ENCODE measurements at regions of chr4 and their contacts with region 1.

Region 1: GRCh38 chr4:168585168-168586091 is 88.6 kb downstream of the PALLD start:
- DNase-seq: peak; percentile 91
- H3K4me3 ChIP-seq: no peak overlapping the region
- H3K27ac ChIP-seq: no peak overlapping the region
- H3K4me1 ChIP-seq: peaks cover 26% of the 10 kb centered on the region
- H3K27me3 ChIP-seq: no peaks in the 10 kb centered on the region
- CTCF ChIP-seq: peak; percentile 91

Region 2: GRCh38 chr4:168631241-168632162 is 46.1 kb after region 1 on chr4:
- CTCF ChIA-PET with region 1: interaction called, 3 read pairs
- POLR2A ChIA-PET with region 1: no interaction called
- intact Hi-C with region 1: loop called (anchors 2 kb)
- DNase-seq: peak; percentile 87
- H3K4me3 ChIP-seq: peak overlapping the region; percentile 68
- H3K27ac ChIP-seq: peak overlapping the region; percentile 58
- H3K4me1 ChIP-seq: peaks cover 51% of the 10 kb centered on the region
- H3K27me3 ChIP-seq: no peaks in the 10 kb centered on the region
- CTCF ChIP-seq: peak; percentile 56

Region 3: DNA sequence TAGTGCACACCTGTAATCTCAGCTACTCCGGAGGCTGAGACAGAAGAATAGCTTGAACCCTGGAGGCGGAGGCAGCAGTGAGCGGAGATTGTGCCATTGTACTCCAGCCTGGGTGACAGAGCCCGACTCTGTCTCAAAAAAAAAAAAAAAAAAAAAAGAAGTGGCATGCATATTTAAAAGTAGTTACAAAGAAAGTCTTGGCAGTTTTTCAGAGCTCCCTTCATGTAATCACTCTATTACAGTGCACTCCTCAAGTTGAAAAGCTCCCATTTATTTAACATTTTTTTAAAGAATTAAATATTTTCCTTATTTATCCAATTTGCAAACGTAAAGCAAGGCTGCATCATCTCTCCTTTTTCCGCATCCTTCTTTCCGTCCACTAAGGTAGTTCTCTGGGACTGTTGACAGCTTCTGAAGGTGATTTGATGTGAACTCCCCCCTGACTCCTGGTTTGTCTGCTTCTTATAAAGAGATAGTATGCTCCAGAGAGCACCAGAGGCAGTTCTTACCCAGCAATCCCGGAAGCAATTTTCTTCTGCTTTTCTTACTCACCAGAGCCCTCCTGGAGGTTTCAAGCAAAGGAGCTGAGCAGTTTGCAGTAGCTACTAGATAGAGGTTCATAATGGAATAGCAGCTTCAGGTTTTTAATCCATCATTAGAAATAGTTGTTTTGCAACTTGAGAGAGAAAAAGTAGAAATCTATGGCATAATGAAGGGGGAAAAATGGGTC is 62.4 kb after region 1 on chr4:
- CTCF ChIA-PET with region 1: interaction called, 10 read pairs
- POLR2A ChIA-PET with region 1: no interaction called
- intact Hi-C with region 1: no loop called
- DNase-seq: peak; percentile 92
- H3K4me3 ChIP-seq: peak overlapping the region; percentile 16
- H3K27ac ChIP-seq: peak overlapping the region; percentile 48
- H3K4me1 ChIP-seq: peaks cover 82% of the 10 kb centered on the region
- H3K27me3 ChIP-seq: no peaks in the 10 kb centered on the region
- CTCF ChIP-seq: no peak

Region 4: GRCh38 chr4:168831919-168832762 is 246.7 kb after region 1 on chr4:
- CTCF ChIA-PET with region 1: no interaction called
- POLR2A ChIA-PET with region 1: interaction called, 6 read pairs
- intact Hi-C with region 1: loop called (anchors 10 kb)
- DNase-seq: peak; percentile 80
- H3K4me3 ChIP-seq: peak overlapping the region; percentile 70
- H3K27ac ChIP-seq: peak overlapping the region; percentile 66
- H3K4me1 ChIP-seq: peaks cover 20% of the 10 kb centered on the region
- H3K27me3 ChIP-seq: no peaks in the 10 kb centered on the region
- CTCF ChIP-seq: no peak

Region 5: DNA sequence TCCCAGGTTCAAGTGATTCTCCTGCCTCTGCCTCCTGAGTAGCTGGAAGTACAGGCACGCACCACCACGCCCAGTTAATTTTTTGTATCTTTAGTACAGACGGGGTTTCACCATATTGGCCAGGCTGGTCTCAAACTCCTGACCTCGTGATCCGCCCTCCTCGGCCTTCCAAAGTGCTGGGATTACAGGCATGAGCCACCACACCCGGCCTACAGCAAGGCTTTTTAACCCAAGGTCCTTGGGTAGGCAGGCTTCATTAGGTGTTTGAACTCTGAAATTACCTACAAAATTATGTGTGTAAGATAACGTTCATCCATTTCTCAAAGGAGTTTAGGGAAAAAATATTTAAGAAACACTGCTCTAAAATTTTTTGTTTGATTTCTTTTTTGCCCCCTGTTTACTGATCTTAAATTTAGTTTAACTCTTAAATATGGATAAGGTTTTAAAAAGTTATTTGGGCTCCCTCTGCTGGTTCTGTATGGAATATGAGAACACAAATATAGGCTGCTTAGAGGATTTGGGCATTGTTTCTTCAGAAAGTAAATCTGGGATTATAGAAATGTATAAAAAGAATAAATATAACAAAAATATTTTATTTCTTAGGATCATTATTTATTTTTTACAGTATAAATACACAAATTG is 331.8 kb after region 1 on chr4:
- CTCF ChIA-PET with region 1: interaction called, 3 read pairs
- POLR2A ChIA-PET with region 1: no interaction called
- intact Hi-C with region 1: loop called (anchors 1 kb)
- DNase-seq: peak; percentile 72
- H3K4me3 ChIP-seq: no peak overlapping the region
- H3K27ac ChIP-seq: no peak overlapping the region
- H3K4me1 ChIP-seq: no peaks in the 10 kb centered on the region
- H3K27me3 ChIP-seq: no peaks in the 10 kb centered on the region
- CTCF ChIP-seq: peak; percentile 78